Astrocyte of the cerebellum (primary cell): ENCODE measurements at regions of chr14 and their contacts with region 1.

Region 1: GRCh38 chr14:55980970-55981369 is 137.2 kb upstream of the PELI2 start:
- DNase-seq: no peak
- H3K4me3 ChIP-seq: no peak overlapping the region
- CTCF ChIP-seq: no peak

Region 2: GRCh38 chr14:55899531-55899930 is 81.4 kb before region 1 on chr14:
- in situ Hi-C with region 1: loop called (anchors 5 kb)
- DNase-seq: peak; percentile 78
- H3K4me3 ChIP-seq: no peak overlapping the region
- CTCF ChIP-seq: no peak

Region 3: GRCh38 chr14:55930016-55930784 is 50.8 kb before region 1 on chr14:
- in situ Hi-C with region 1: loop called (anchors 5 kb)
- DNase-seq: no peak
- H3K4me3 ChIP-seq: no peak overlapping the region
- CTCF ChIP-seq: no peak